ENCODE measurements at regions of chr12 and their contacts with region 1.

Region 1: DNA sequence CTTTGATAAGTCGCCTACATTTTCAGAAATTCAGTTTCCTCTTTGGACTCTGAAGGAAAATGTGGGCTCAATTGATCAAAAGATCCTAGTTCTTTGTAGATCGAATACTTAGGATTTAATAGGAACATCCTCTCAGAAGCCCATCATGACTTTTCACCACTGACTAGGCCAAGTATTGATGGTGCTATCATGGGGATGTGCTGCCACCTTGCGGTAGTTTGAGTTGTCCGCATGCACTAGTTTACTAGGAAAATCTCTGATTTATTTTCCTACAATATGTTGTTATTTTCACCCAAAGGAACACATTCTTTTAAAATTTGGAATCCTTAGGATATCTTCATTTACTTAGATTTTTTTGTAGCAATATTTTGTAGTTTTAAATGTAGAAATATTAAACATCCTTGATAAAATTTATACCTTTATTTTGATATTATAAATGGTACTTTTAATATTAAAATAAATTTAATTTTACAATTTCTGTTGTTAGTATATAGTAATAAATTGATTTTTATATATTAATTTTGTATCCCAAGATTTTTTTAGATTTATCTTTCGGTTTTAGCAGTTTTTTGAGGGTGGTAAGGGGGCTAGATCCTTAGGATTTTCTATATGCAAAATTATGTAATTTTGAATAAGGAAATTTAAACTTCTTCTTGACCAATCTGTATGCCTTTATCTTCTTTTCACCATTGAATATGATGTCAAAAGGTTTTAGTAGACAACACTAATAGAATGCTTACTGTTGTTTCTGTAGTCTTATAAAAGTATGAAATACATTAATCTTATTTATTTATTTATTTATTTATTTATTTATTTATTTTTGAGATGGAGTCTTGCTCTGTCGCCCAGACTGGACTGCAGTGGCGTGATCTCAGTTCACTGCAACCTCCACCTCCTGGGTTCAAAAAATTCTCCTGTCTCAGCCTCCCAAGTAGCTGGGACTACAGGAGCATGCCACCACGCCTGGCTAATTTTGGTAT is 52.9 kb upstream of the OR9K2 start:
- DNase-seq: peak; percentile 50 to 79 (median 72)
- ATAC-seq: peak; percentile 76
- H3K4me3 ChIP-seq: no peak overlapping the region
- H3K4me3 Mint-ChIP-seq: no peak overlapping the region
- H3K27ac ChIP-seq: no peak overlapping the region
- H3K27ac Mint-ChIP-seq: peak overlapping the region in 2 of 9 donors; percentile 59 to 82
- H3K4me1 ChIP-seq: no peaks in the 10 kb centered on the region
- H3K4me1 Mint-ChIP-seq: peaks cover 2 to 10% (median 9%) of the 10 kb centered on the region in 7 donors
- H3K27me3 ChIP-seq: no peaks in the 10 kb centered on the region
- H3K27me3 Mint-ChIP-seq: peaks cover 23 to 35% (median 27%) of the 10 kb centered on the region in 5 donors

Region 2: DNA sequence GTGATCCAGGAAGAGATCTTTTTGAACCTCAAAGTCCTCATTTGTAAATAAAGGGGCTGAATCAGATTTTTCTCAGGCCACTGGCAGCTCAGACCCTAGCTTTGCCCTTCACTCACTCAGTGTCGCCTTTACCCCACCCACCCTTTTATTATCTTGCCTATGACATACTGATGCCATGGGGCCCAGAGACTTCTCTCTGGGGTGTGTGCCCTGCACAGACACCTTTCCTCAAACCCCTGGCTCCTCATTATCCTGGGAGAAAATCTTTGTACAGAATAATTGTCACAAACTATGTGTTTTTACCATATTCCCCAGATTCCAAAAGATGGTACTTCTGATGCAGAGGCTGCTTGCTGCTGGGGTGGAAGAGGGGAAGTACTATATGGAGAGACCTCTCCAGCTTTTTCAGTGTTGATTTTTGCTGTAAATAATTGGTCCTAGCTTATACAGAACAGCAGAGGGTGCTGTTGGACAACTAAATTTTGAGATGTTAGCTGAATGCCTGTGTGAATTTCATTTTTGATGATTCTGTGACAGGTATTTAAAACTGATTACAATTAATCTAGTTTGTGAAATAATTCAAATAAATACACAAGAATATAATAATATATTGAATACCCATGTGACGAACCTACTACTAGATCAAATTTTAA is 371.3 kb before region 1 on chr12:
- CTCF ChIA-PET with region 1: interaction called, 75 read pairs
- POLR2A ChIA-PET with region 1: no interaction called
- intact Hi-C with region 1: loop called (anchors 1 kb)
- DNase-seq: peak in 7 of 9 donors; percentile 16 to 67 (median 56)
- ATAC-seq: peak; percentile 81
- H3K4me3 ChIP-seq: no peak overlapping the region
- H3K4me3 Mint-ChIP-seq: no peak overlapping the region
- H3K27ac ChIP-seq: no peak overlapping the region
- H3K27ac Mint-ChIP-seq: no peak overlapping the region
- H3K4me1 ChIP-seq: no peaks in the 10 kb centered on the region
- H3K4me1 Mint-ChIP-seq: no peaks in the 10 kb centered on the region
- H3K27me3 ChIP-seq: no peaks in the 10 kb centered on the region
- H3K27me3 Mint-ChIP-seq: peaks cover 0 to 27% (median 6%) of the 10 kb centered on the region in 5 donors

Region 3: GRCh38 chr12:54759751-54760150 is 313.6 kb before region 1 on chr12:
- CTCF ChIA-PET with region 1: interaction called, 39 read pairs
- POLR2A ChIA-PET with region 1: no interaction called
- intact Hi-C with region 1: loop called in 1 of 2 experiments (anchors 1 kb)
- DNase-seq: peak in 3 of 9 donors; percentile 14 to 45 (median 26)
- ATAC-seq: no peak
- H3K4me3 ChIP-seq: no peak overlapping the region
- H3K4me3 Mint-ChIP-seq: no peak overlapping the region
- H3K27ac ChIP-seq: no peak overlapping the region
- H3K27ac Mint-ChIP-seq: no peak overlapping the region
- H3K4me1 ChIP-seq: no peaks in the 10 kb centered on the region
- H3K4me1 Mint-ChIP-seq: peaks cover 0 to 20% (median 4%) of the 10 kb centered on the region in 7 donors
- H3K27me3 ChIP-seq: no peaks in the 10 kb centered on the region
- H3K27me3 Mint-ChIP-seq: peaks cover 0 to 24% (median 0%) of the 10 kb centered on the region in 5 donors

Region 4: GRCh38 chr12:54891717-54892554 is 181.4 kb before region 1 on chr12:
- CTCF ChIA-PET with region 1: no interaction called
- POLR2A ChIA-PET with region 1: no interaction called
- intact Hi-C with region 1: no loop called
- DNase-seq: no peak
- ATAC-seq: no peak
- H3K4me3 ChIP-seq: no peak overlapping the region
- H3K4me3 Mint-ChIP-seq: no peak overlapping the region
- H3K27ac ChIP-seq: no peak overlapping the region
- H3K27ac Mint-ChIP-seq: no peak overlapping the region
- H3K4me1 ChIP-seq: no peaks in the 10 kb centered on the region
- H3K4me1 Mint-ChIP-seq: peaks cover 0 to 13% (median 9%) of the 10 kb centered on the region in 7 donors
- H3K27me3 ChIP-seq: no peaks in the 10 kb centered on the region
- H3K27me3 Mint-ChIP-seq: peaks cover 0 to 6% (median 0%) of the 10 kb centered on the region in 5 donors

Region 5: GRCh38 chr12:54917001-54917488 is 156.3 kb before region 1 on chr12:
- CTCF ChIA-PET with region 1: no interaction called
- POLR2A ChIA-PET with region 1: no interaction called
- intact Hi-C with region 1: no loop called
- DNase-seq: no peak
- ATAC-seq: no peak
- H3K4me3 ChIP-seq: no peak overlapping the region
- H3K4me3 Mint-ChIP-seq: no peak overlapping the region
- H3K27ac ChIP-seq: no peak overlapping the region
- H3K27ac Mint-ChIP-seq: no peak overlapping the region
- H3K4me1 ChIP-seq: no peaks in the 10 kb centered on the region
- H3K4me1 Mint-ChIP-seq: no peaks in the 10 kb centered on the region
- H3K27me3 ChIP-seq: no peaks in the 10 kb centered on the region
- H3K27me3 Mint-ChIP-seq: no peaks in the 10 kb centered on the region

Region 6: GRCh38 chr12:54958048-54958658 is 115.2 kb before region 1 on chr12:
- CTCF ChIA-PET with region 1: interaction called, 52 read pairs
- POLR2A ChIA-PET with region 1: interaction called, 3 read pairs
- intact Hi-C with region 1: loop called (anchors 1 kb)
- DNase-seq: peak in 7 of 9 donors; percentile 28 to 66 (median 58)
- ATAC-seq: peak; percentile 73
- H3K4me3 ChIP-seq: no peak overlapping the region
- H3K4me3 Mint-ChIP-seq: peak overlapping the region in 7 of 10 donors; percentile 1 to 65 (median 40)
- H3K27ac ChIP-seq: peak overlapping the region; percentile 0
- H3K27ac Mint-ChIP-seq: peak overlapping the region; percentile 5 to 94 (median 77)
- H3K4me1 ChIP-seq: peaks cover 33 to 69% of the 10 kb centered on the region in 2 donors
- H3K4me1 Mint-ChIP-seq: peaks cover 64 to 100% (median 95%) of the 10 kb centered on the region in 7 donors
- H3K27me3 ChIP-seq: no peaks in the 10 kb centered on the region
- H3K27me3 Mint-ChIP-seq: no peaks in the 10 kb centered on the region

Region 7: DNA sequence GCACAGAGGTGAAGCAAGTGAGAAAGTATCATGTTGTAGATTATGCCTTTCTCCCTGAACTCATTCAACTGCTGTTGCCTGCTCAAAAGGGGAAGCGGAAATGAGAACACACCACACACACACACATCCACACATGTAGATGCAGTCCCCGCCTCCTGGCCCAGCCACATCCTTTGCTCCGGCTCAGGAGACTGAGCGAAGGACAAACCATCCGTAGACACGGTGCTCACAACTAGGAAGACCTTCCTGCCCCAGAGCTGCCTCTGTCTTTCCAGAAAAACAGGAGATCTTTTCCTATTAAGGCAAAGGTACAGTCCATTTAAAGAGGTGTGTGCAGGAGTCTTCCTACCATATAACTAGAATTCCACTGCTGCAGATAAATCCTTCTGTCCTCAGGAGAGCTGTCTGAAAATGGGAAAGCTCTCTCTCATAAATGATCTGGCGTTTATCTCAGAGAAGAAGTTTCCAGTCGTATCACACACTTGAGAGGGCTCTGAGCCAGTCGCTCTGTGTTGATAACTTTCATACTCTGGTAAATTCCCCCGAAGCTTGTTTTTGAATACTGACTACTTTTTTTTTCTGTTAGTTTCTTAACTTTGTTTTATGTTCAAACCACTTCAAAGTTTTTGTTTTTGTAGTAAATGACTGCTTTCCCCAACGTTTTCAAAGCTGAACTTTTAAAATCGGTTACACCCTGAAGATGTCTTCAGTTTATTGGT is 88.5 kb before region 1 on chr12 and contains the start of gene TESPA1:
- CTCF ChIA-PET with region 1: interaction called, 68 read pairs
- POLR2A ChIA-PET with region 1: interaction called, 15 read pairs
- intact Hi-C with region 1: no loop called
- DNase-seq: peak; percentile 55 to 94 (median 90)
- ATAC-seq: peak; percentile 93
- H3K4me3 ChIP-seq: peak within 1 kb of the TSS; percentile 67
- H3K4me3 Mint-ChIP-seq: peak within 1 kb of the TSS; percentile 90 to 98 (median 95)
- H3K27ac ChIP-seq: peak within 1 kb of the TSS; percentile 94
- H3K27ac Mint-ChIP-seq: peak within 1 kb of the TSS; percentile 95 to 100 (median 98)
- H3K4me1 ChIP-seq: peaks cover 49 to 51% of the 10 kb centered on the region in 2 donors
- H3K4me1 Mint-ChIP-seq: peaks cover 45 to 78% (median 69%) of the 10 kb centered on the region in 7 donors
- H3K27me3 ChIP-seq: no peaks in the 10 kb centered on the region
- H3K27me3 Mint-ChIP-seq: no peaks in the 10 kb centered on the region
- total RNA-seq, gene TESPA1: 120 to 301 (median 186) TPM

Region 8: DNA sequence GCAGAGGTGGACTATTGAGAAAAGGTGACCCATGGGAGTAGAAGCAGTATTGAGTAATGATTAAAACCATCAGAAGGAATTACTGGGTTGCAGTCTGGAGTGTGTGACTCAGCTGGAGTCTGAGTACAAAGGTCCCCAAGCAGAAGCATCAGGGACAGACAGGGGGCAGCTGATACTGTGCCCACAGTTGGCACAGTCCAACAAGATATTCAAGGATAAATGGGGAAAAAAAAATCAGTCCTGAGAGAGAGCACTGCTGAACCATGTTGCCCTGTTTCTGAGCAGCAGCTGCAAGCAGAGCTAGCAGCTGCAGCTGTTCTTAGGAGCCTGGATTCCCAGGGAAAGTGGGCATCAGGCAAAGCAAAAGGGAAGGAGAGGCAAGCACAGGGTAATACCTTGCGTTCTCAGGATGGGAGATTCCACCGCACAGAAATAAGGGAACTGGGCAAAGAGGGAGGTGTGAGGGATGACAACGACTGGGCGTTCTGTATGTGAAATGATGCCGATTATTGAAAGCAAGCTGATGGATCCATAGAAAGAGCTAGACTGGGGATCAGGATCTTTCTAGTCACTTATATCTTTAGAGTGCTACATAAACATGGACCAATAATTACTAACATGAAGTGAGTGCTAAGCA is 35.9 kb before region 1 on chr12:
- CTCF ChIA-PET with region 1: interaction called, 15 read pairs
- POLR2A ChIA-PET with region 1: interaction called, 5 read pairs
- intact Hi-C with region 1: loop called in 1 of 2 experiments (anchors 2 kb)
- DNase-seq: no peak
- ATAC-seq: no peak
- H3K4me3 ChIP-seq: no peak overlapping the region
- H3K4me3 Mint-ChIP-seq: peak overlapping the region in 9 of 10 donors; percentile 45 to 87 (median 76)
- H3K27ac ChIP-seq: no peak overlapping the region
- H3K27ac Mint-ChIP-seq: peak overlapping the region in 8 of 9 donors; percentile 67 to 90 (median 80)
- H3K4me1 ChIP-seq: peaks cover 15 to 46% of the 10 kb centered on the region in 2 donors
- H3K4me1 Mint-ChIP-seq: peaks cover 17 to 67% (median 65%) of the 10 kb centered on the region in 7 donors
- H3K27me3 ChIP-seq: no peaks in the 10 kb centered on the region
- H3K27me3 Mint-ChIP-seq: peaks cover 0 to 29% (median 0%) of the 10 kb centered on the region in 5 donors

Measured in naive thymus-derived CD4-positive, alpha-beta T cell (primary cell).